IMR-90 (cell line): ENCODE measurements at regions of chr14 and their contacts with region 1.

Region 1: GRCh38 chr14:69818757-69819191 is 21.7 kb upstream of the SLC10A1 start:
- DNase-seq: peak; percentile 60
- ATAC-seq: peak; percentile 91
- H3K4me3 ChIP-seq: no peak overlapping the region
- H3K27ac ChIP-seq: no peak overlapping the region
- H3K4me1 ChIP-seq: no peaks in the 10 kb centered on the region
- H3K27me3 ChIP-seq: peaks cover 24% of the 10 kb centered on the region
- CTCF ChIP-seq: peak; percentile 93
- POLR2A ChIP-seq: peak; percentile 44; the same call in 1 of the 2 replicates
- RAD21 ChIP-seq: peak; percentile 98

Region 2: GRCh38 chr14:68663385-68664076 is 1155.2 kb before region 1 on chr14:
- CTCF ChIA-PET with region 1: no interaction called
- POLR2A ChIA-PET with region 1: no interaction called
- dilution Hi-C with region 1: no loop called
- in situ Hi-C with region 1: no loop called
- intact Hi-C with region 1: no loop called
- DNase-seq: peak; percentile 91
- ATAC-seq: peak; percentile 38
- H3K4me3 ChIP-seq: peak overlapping the region; percentile 6; the same call in 1 of the 2 replicates
- H3K27ac ChIP-seq: peak overlapping the region; percentile 35; the same call in 1 of the 2 replicates
- H3K4me1 ChIP-seq: peaks cover 40% of the 10 kb centered on the region
- H3K27me3 ChIP-seq: no peaks in the 10 kb centered on the region
- CTCF ChIP-seq: no peak
- POLR2A ChIP-seq: no peak
- RAD21 ChIP-seq: peak; percentile 30

Region 3: DNA sequence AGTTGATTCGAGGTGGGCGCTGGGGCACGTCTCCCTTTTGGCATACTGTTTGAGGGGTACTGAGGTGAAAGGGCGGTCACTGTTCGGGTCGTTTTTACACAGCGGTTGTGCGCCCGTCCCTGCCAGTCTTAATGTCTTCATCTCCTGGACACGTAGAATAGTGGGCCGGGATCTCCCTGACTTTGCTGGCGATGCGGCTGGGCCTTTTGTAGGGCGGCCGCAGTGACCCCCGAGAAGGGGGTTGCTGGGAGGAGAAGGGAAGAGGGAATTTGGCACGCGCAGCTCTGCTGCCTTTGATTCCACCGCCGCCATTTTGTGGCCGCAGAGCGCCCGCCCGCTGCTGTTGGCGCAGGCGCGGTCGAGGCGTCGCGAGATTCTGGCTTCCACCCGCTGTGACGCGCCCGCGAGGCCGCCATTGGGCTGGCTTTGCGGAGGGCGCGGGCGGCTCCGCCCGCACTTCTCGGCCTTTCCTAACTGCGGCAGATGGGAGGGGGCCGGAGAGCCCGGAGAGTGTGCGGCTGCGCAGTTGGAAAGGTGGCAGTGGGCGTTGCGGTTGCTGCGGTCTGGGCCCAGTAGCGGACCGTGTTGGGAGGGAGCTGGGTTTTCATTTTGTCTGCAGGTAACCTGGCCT is 51.3 kb before region 1 on chr14:
- CTCF ChIA-PET with region 1: no interaction called
- POLR2A ChIA-PET with region 1: no interaction called
- dilution Hi-C with region 1: no loop called
- in situ Hi-C with region 1: no loop called
- intact Hi-C with region 1: no loop called
- DNase-seq: peak; percentile 90
- ATAC-seq: peak; percentile 85
- H3K4me3 ChIP-seq: peak overlapping the region; percentile 72
- H3K27ac ChIP-seq: peak overlapping the region; percentile 92
- H3K4me1 ChIP-seq: peaks cover 4% of the 10 kb centered on the region
- H3K27me3 ChIP-seq: no peaks in the 10 kb centered on the region
- CTCF ChIP-seq: no peak
- POLR2A ChIP-seq: peak; percentile 79; the same call in 1 of the 2 replicates
- RAD21 ChIP-seq: no peak

Region 4: DNA sequence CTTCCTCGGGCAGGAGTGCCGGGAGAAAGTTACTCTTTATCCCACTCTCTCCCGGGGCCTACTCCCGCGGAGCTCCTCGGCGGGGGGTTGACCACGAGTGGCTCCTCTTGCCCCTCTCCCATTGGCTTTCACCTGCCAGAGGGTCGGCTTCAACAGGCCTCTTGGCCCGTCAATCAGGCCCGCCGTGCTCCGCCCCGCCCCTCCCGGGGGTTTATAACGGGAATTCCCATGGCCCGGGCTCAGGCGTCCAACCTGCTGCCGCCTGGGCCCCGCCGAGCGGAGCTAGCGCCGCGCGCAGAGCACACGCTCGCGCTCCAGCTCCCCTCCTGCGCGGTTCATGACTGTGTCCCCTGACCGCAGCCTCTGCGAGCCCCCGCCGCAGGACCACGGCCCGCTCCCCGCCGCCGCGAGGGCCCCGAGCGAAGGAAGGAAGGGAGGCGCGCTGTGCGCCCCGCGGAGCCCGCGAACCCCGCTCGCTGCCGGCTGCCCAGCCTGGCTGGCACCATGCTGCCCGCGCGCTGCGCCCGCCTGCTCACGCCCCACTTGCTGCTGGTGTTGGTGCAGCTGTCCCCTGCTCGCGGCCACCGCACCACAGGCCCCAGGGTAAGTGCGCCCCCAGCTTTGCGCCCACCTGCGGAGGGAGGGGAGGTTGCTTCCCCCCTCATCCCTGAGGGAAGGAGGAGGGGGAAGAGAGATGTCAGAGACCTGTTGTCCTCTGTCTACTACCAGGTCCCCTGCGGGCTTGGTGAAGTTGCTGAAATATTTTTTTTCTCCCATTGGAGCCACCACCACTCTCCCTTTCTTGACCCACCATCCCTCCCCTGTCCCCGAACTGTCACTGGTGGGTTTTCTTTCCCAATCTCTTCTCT is 60.6 kb after region 1 on chr14 and contains the start of gene SMOC1:
- CTCF ChIA-PET with region 1: interaction called, 3 read pairs
- POLR2A ChIA-PET with region 1: no interaction called
- dilution Hi-C with region 1: no loop called
- in situ Hi-C with region 1: no loop called
- intact Hi-C with region 1: loop called (anchors 2 kb)
- DNase-seq: peak; percentile 79
- ATAC-seq: peak; percentile 88
- H3K4me3 ChIP-seq: peak within 1 kb of the TSS; percentile 78
- H3K27ac ChIP-seq: peak within 1 kb of the TSS; percentile 27; the same call in 1 of the 2 replicates
- H3K4me1 ChIP-seq: peaks cover 7% of the 10 kb centered on the region
- H3K27me3 ChIP-seq: 0 out of 2 replicates have a peak, but pooled peaks cover 2% of the 10 kb centered on the region
- CTCF ChIP-seq: 0 out of 2 replicates have a peak, but pooled peaks have one; percentile 8
- POLR2A ChIP-seq: peak; percentile 92
- RAD21 ChIP-seq: 0 out of 2 replicates have a peak, but pooled peaks have one; percentile 11
- total RNA-seq, gene SMOC1: 0.90 and 1.1 TPM in 2 replicates

Region 5: GRCh38 chr14:70027785-70028428 is 209.1 kb after region 1 on chr14:
- CTCF ChIA-PET with region 1: interaction called, 11 read pairs
- POLR2A ChIA-PET with region 1: no interaction called
- dilution Hi-C with region 1: no loop called
- in situ Hi-C with region 1: loop called (anchors 5 kb)
- intact Hi-C with region 1: loop called (anchors 1 kb)
- DNase-seq: peak; percentile 46
- ATAC-seq: peak; percentile 92
- H3K4me3 ChIP-seq: no peak overlapping the region
- H3K27ac ChIP-seq: no peak overlapping the region
- H3K4me1 ChIP-seq: 0 out of 2 replicates have a peak, but pooled peaks cover 2% of the 10 kb centered on the region
- H3K27me3 ChIP-seq: no peaks in the 10 kb centered on the region
- CTCF ChIP-seq: peak; percentile 94
- POLR2A ChIP-seq: peak; percentile 59; the same call in 1 of the 2 replicates
- RAD21 ChIP-seq: peak; percentile 99

Region 6: DNA sequence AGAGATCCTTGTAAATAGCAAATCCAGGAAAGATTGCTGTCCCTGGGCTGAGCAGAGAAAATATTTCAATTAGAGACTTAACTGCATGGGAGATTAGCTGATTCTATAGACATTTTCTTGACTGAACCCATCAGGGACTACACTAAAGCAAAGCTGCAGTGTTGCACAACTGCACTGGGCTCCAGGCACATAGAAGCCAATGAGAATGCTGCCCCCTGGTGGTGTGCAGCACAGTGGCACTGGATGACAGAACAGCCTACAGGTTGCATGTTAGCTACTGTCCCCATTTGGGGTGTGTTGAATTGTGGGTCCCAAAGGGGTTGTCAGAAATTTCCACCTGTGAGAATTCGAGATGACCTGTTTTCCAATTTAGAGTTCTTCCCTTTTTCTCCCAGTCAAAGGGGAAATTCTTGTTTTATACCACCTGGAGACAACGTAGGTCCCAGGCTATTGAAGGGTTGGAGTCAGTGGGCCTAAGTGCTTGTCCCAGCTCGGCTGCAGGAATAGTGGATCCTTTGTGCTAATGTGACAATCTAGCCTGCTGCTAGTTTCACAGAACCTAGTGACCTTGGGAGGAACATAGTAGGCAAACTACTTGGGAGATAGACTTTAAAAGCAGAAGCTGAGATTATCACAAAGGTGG is 255.3 kb after region 1 on chr14:
- CTCF ChIA-PET with region 1: interaction called, 13 read pairs
- POLR2A ChIA-PET with region 1: no interaction called
- dilution Hi-C with region 1: no loop called
- in situ Hi-C with region 1: no loop called
- intact Hi-C with region 1: loop called (anchors 1 kb)
- DNase-seq: peak; percentile 73
- ATAC-seq: peak; percentile 95
- H3K4me3 ChIP-seq: no peak overlapping the region
- H3K27ac ChIP-seq: no peak overlapping the region
- H3K4me1 ChIP-seq: no peaks in the 10 kb centered on the region
- H3K27me3 ChIP-seq: peaks cover 19% of the 10 kb centered on the region
- CTCF ChIP-seq: peak; percentile 79
- POLR2A ChIP-seq: no peak
- RAD21 ChIP-seq: peak; percentile 76

Region 7: GRCh38 chr14:70567791-70568190 is 749.0 kb after region 1 on chr14:
- CTCF ChIA-PET with region 1: no interaction called
- POLR2A ChIA-PET with region 1: no interaction called
- dilution Hi-C with region 1: no loop called
- in situ Hi-C with region 1: no loop called
- intact Hi-C with region 1: loop called (anchors 1 kb)
- DNase-seq: peak; percentile 39
- ATAC-seq: peak; percentile 93
- H3K4me3 ChIP-seq: no peak overlapping the region
- H3K27ac ChIP-seq: no peak overlapping the region
- H3K4me1 ChIP-seq: no peaks in the 10 kb centered on the region
- H3K27me3 ChIP-seq: no peaks in the 10 kb centered on the region
- CTCF ChIP-seq: peak; percentile 52
- POLR2A ChIP-seq: no peak
- RAD21 ChIP-seq: peak; percentile 59